ENCODE measurements at regions of chr16 and their contacts with region 1.

Region 1: GRCh38 chr16:86751076-86752030 is 173.0 kb downstream of the FOXL1 start:
- DNase-seq: no peak
- ATAC-seq: no peak

Region 2: DNA sequence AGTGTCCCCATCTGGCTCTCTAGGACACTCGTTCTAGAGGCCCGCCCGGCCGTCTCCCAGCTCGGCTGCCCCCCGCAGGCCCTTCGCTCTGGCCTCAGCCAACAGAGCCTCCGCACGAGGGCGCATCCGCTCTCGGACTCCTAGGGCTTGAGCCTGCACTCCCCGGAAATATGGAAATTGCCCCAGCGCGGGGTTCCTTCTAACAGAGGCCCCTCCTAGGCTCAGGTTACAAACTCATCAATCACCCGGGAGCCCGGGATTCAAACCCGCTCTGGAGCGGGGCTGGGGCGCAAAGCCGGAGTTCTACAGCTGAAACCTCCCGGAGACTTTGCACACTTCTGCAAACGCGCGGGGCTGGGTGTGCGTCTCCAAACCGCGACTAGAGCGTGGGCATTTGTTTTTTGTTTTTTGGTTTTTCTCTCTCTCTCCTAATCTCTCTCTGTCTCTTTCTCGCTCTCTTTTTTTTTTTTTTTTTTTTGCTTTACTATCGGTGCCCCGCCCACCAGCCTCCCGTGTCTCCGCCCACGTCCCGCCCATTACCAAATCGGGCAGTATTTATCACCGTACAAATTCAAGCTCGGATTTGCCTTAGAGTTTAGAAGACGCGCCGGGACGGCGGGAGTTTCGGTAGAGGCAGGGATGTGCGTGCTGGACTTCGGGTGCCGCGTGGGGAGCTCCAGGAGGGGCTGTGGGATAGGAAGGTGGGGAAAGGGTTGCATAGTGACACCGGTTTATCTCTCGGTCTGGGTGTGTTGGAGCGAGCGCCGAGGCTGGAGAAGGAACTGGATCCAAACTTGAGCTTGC is 175.4 kb before region 1 on chr16:
- intact Hi-C with region 1: loop called in 1 of 2 experiments (anchors 10 kb)
- DNase-seq: peak; percentile 47 to 76
- ATAC-seq: peak; percentile 84